Sigmoid colon (tissue), 7 donors: ENCODE measurements at regions of chr10 and their contacts with region 1.

Region 1: GRCh38 chr10:101012525-101013364 is 13.1 kb downstream of the LZTS2 start:
- DNase-seq: peak; percentile 95
- H3K4me3 ChIP-seq: no peak overlapping the region
- H3K27ac ChIP-seq: peak overlapping the region; percentile 51 to 70 (median 60)
- H3K4me1 ChIP-seq: peaks cover 0 to 36% (median 34%) of the 10 kb centered on the region in 4 donors
- H3K27me3 ChIP-seq: peaks cover 0 to 7% (median 6%) of the 10 kb centered on the region in 3 donors
- CTCF ChIP-seq: peak; percentile 76 to 98 (median 88)
- EP300 ChIP-seq: no peak
- POLR2A ChIP-seq: no peak

Region 2: GRCh38 chr10:100969187-100970075 is 43.3 kb before region 1 on chr10 and contains the start of gene SEMA4G:
- intact Hi-C with region 1: loop called (anchors 2 kb)
- DNase-seq: peak; percentile 78
- H3K4me3 ChIP-seq: peak within 1 kb of the TSS; percentile 39 to 62 (median 53)
- H3K27ac ChIP-seq: peak within 1 kb of the TSS in 2 of 4 donors; percentile 22 to 48
- H3K4me1 ChIP-seq: peaks cover 0 to 18% (median 17%) of the 10 kb centered on the region in 4 donors
- H3K27me3 ChIP-seq: peaks cover 0 to 10% (median 0%) of the 10 kb centered on the region in 3 donors
- CTCF ChIP-seq: peak; percentile 53 to 79 (median 76)
- EP300 ChIP-seq: no peak
- POLR2A ChIP-seq: no peak
- total RNA-seq, gene SEMA4G: 0.49 to 2.2 (median 0.90) TPM

Region 3: GRCh38 chr10:100993986-100994708 is 18.6 kb before region 1 on chr10:
- intact Hi-C with region 1: loop called (anchors 1 kb)
- DNase-seq: peak; percentile 66
- H3K4me3 ChIP-seq: no peak overlapping the region
- H3K27ac ChIP-seq: no peak overlapping the region
- H3K4me1 ChIP-seq: peaks cover 0 to 27% (median 16%) of the 10 kb centered on the region in 4 donors
- H3K27me3 ChIP-seq: no peaks in the 10 kb centered on the region
- CTCF ChIP-seq: peak; percentile 62 to 78 (median 70)
- EP300 ChIP-seq: no peak
- POLR2A ChIP-seq: no peak

Region 4: DNA sequence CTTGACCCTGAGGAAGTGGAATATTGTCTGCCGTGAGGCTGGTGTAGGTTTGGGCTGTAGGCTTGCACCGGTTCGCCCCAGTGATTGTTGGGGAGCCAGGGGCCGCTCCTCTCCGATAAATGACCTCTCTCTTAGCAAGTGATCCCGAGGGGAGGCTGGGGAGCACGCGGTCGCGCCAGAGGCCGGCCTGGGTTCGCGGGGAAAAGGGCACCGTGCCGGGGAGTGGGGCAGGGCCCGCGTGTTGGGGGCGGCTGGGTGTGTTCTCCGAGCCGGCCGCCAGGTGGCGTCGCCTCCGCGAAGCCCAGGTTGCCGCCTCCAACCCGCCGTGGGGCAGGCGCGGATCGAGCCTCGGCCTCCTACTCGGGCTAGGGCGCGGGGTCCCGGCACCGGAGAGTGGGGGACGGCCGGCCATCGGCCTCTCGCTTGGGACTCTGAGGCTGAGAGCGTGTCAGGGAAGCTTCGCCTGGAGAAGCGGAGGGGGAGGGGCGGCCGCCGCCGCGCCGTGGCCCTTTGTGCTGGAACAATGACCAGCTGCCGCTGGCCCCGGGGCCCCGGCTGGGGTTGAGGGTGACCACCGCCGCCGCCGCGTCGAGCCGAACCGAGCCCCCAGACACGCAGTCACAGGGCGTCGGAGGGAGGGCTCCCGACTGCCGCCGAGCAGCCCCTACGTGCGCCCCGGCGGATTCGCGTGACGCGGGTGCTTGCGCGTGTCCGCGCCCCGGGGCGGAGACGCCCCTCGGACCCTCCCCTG is 13.6 kb before region 1 on chr10:
- intact Hi-C with region 1: loop called (anchors 1 kb)
- DNase-seq: peak; percentile 93
- H3K4me3 ChIP-seq: peak overlapping the region; percentile 80 to 90 (median 90)
- H3K27ac ChIP-seq: peak overlapping the region; percentile 99 to 100 (median 100)
- H3K4me1 ChIP-seq: peaks cover 0 to 62% (median 53%) of the 10 kb centered on the region in 4 donors
- H3K27me3 ChIP-seq: no peaks in the 10 kb centered on the region
- CTCF ChIP-seq: peak; percentile 96 to 97 (median 96)
- EP300 ChIP-seq: no peak
- POLR2A ChIP-seq: peak; percentile 70 to 75

Region 5: GRCh38 chr10:101080933-101081931 is 68.5 kb after region 1 on chr10:
- intact Hi-C with region 1: no loop called
- DNase-seq: no peak
- H3K4me3 ChIP-seq: no peak overlapping the region
- H3K27ac ChIP-seq: no peak overlapping the region
- H3K4me1 ChIP-seq: no peaks in the 10 kb centered on the region
- H3K27me3 ChIP-seq: peaks cover 1 to 60% (median 8%) of the 10 kb centered on the region in 3 donors
- CTCF ChIP-seq: no peak
- EP300 ChIP-seq: no peak
- POLR2A ChIP-seq: no peak